ENCODE measurements at regions of chr11 and their contacts with region 1.

Region 1: GRCh38 chr11:36478700-36479329 is 31.3 kb downstream of the TRAF6 start:
- DNase-seq: peak; percentile 51
- ATAC-seq: peak; percentile 47
- H3K4me3 Mint-ChIP-seq: no peak overlapping the region
- H3K27ac Mint-ChIP-seq: no peak overlapping the region
- H3K4me1 Mint-ChIP-seq: peaks cover 6% of the 10 kb centered on the region
- H3K27me3 Mint-ChIP-seq: peaks cover 7% of the 10 kb centered on the region

Region 2: GRCh38 chr11:36212564-36213392 is 266.0 kb before region 1 on chr11:
- CTCF ChIA-PET with region 1: no interaction called
- POLR2A ChIA-PET with region 1: no interaction called
- DNase-seq: no peak
- ATAC-seq: no peak
- H3K4me3 Mint-ChIP-seq: no peak overlapping the region
- H3K27ac Mint-ChIP-seq: no peak overlapping the region
- H3K4me1 Mint-ChIP-seq: no peaks in the 10 kb centered on the region
- H3K27me3 Mint-ChIP-seq: no peaks in the 10 kb centered on the region

Region 3: DNA sequence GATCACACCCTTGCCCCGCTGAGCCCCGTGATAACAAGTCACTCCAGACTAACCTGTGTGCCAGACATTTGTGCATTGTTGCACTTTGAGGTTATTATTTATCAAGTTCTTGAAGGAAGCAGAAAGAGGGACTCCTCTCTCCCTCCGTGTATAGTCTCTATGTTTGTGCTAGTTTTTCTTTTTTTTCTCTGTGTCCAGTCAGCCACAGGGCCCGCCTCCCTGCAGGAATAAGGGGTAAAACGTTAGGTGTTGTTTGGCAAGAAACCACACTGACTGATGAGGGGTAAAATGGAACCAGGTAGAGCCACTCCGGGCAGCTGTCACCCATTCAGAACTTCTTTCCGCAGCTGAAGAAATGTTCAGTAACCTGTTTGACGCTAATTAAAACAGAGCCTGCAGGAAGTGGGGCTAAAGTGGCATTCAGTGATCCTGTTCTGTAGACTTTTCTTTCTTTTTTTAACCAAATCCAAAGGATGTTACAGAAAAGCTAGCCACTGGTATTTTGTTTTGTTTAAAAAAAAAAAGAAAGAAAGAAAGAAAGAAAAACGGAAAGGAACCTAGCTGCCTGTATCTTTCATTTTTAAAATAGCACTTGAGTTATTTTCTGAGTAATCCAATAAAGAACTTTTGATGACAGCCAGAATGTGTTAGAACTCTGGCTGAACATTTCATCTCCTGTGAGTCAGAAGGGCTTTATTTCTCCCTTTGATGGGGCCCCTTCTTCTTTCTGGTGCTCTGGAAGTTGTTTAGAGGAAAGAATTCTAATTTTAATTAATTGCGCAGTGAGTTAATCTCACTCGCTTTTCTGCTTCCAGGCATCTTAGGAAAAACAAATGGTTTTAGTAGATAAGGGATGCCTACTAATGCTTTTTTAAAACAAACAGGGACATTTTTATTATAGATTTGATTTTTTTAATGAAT is 247.8 kb before region 1 on chr11:
- CTCF ChIA-PET with region 1: no interaction called
- POLR2A ChIA-PET with region 1: no interaction called
- DNase-seq: no peak
- ATAC-seq: no peak
- H3K4me3 Mint-ChIP-seq: no peak overlapping the region
- H3K27ac Mint-ChIP-seq: no peak overlapping the region
- H3K4me1 Mint-ChIP-seq: no peaks in the 10 kb centered on the region
- H3K27me3 Mint-ChIP-seq: no peaks in the 10 kb centered on the region

Region 4: DNA sequence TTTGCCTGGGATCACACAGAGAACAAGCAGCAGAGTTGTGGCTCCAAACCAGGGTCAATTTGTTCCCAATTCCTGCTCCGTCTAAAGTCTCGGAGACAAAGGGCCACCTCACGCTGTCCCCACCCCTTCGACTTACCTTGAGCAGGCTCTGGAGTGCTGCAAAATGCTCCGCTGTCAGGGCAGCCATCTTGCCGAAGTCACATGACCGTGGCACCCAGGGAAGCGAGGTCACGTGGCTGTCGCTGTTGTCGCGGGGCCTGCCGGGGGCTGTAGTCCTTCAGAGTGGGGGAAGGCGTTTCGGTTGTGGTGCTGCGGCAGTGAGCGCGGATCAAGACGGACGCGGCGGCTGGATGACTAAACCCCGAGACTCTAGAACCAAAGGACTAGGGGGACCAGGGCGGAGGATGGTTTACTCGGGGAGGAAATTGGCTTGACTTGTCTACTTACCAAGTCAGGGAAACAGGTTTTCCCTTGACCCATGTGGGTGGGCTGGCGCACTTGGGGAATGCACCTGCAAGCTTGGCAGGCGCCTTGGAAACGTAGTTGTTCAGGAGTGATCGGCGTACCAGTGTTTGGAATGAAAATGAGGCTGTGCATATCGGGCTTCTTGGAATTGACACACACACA is 189.5 kb before region 1 on chr11 and contains the start of gene COMMD9:
- CTCF ChIA-PET with region 1: interaction called, 201 read pairs
- POLR2A ChIA-PET with region 1: no interaction called
- DNase-seq: peak; percentile 97
- ATAC-seq: peak; percentile 99
- H3K4me3 Mint-ChIP-seq: peak within 1 kb of the TSS; percentile 92
- H3K27ac Mint-ChIP-seq: peak within 1 kb of the TSS; percentile 89
- H3K4me1 Mint-ChIP-seq: peaks cover 28% of the 10 kb centered on the region
- H3K27me3 Mint-ChIP-seq: peaks cover 3% of the 10 kb centered on the region
- total RNA-seq, gene COMMD9: 44.6 to 47.5 TPM

Region 5: DNA sequence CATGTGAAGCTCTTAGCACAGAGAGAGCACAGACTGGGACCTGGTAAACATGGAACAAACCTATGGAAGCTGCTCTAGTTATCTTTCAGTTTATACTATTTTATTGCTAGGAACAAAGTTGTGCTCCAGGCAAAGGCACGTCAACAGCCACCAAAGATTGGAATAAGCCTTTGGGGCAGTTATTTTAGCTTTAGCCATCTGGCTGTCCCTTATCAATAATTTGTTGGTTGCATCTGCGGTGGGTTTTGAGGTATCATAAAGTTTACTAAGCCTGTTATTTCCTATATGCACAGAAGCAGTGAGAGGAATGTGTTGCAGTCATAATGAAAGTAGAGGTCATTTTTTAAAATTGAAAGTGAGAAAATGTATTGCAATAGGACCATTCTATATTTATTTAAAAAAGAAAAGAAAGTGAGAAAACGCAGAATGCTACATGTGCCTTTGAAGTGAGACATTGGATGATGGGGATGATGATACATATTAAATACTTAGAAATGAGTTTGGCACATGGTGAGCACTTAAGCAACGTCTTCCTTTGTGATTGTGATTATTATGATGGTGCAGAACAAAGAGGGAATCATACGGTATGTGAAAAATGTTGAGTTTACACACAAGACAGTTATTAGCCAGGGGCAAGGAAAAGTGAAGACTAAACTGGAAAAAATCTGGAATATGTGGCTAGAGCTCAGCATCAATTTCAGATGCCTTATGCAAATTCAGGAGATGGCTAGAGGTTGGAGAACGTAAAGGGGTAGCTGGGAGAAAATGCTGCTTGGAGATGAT is 124.4 kb before region 1 on chr11:
- CTCF ChIA-PET with region 1: interaction called, 62 read pairs
- POLR2A ChIA-PET with region 1: no interaction called
- DNase-seq: no peak
- ATAC-seq: peak; percentile 29
- H3K4me3 Mint-ChIP-seq: no peak overlapping the region
- H3K27ac Mint-ChIP-seq: no peak overlapping the region
- H3K4me1 Mint-ChIP-seq: peaks cover 43% of the 10 kb centered on the region
- H3K27me3 Mint-ChIP-seq: peaks cover 24% of the 10 kb centered on the region

Region 6: DNA sequence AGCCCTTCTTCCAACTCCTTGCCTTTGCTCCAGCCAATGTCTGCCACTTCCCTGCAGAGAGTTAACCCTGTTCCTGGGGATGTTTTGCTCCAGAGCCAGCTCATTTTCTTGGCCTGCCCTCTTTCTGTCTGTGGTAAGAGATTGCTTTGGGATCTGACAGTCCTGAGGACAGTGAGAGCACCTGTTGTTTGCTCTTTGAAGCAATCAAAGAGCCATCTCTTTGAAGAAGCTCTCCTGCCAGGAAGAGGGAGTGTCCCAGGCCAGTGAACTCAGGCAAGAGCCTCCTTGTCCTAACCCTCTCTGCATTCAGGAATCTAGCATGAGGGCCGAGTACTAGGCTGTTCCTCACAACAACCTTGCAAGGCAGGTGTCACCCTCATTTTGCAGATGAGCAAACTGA is 10.9 kb before region 1 on chr11:
- CTCF ChIA-PET with region 1: interaction called, 14 read pairs
- POLR2A ChIA-PET with region 1: interaction called, 4 read pairs
- DNase-seq: no peak
- ATAC-seq: no peak
- H3K4me3 Mint-ChIP-seq: no peak overlapping the region
- H3K27ac Mint-ChIP-seq: no peak overlapping the region
- H3K4me1 Mint-ChIP-seq: no peaks in the 10 kb centered on the region
- H3K27me3 Mint-ChIP-seq: peaks cover 11% of the 10 kb centered on the region

Region 7: DNA sequence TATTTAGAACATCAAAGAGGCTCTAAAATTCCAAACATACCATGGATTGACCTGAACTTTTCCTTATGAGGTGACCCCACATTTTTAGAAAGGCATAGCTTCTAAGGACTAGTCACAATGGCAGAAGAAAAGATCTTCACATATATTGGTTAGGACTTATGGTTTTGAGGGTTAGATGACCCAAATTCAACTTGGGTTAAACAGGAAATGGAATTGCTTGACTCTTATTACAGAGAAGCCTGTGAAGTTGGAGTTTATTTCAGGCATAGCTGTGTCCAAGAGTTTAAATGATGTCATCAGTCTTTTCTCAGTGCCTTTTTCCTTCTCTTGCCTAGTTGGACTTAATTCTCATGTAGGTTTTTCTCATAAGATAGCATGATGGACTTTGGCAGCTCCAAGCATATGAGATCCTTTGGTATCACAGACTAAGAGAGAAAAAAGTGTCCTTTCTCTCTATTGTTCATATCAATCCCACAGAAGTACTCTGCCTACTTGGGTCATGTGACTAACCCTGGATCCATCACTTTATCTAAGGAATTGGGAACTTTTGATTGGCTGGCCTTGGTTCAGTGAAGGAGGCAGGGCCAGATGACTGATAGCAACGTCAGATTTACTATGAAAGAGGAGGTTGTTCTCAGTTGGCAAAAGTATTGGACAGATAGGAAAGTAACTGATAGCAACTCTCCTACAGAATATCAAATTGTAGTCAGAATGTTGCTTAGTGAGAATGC is 71.7 kb after region 1 on chr11:
- CTCF ChIA-PET with region 1: no interaction called
- POLR2A ChIA-PET with region 1: no interaction called
- DNase-seq: no peak
- ATAC-seq: no peak
- H3K4me3 Mint-ChIP-seq: no peak overlapping the region
- H3K27ac Mint-ChIP-seq: no peak overlapping the region
- H3K4me1 Mint-ChIP-seq: peaks cover 1% of the 10 kb centered on the region
- H3K27me3 Mint-ChIP-seq: peaks cover 16% of the 10 kb centered on the region

Measured in activated CD8-positive, alpha-beta T cell treated with anti-CD3 and anti-CD28 coated beads, Interleukin-2, amount 10 ng/mL, durations not matched to agents 7 days and 5 days (primary cell).